MCF 10A (cell line): ENCODE measurements at regions of chr2 and their contacts with region 1.

Region 1: DNA sequence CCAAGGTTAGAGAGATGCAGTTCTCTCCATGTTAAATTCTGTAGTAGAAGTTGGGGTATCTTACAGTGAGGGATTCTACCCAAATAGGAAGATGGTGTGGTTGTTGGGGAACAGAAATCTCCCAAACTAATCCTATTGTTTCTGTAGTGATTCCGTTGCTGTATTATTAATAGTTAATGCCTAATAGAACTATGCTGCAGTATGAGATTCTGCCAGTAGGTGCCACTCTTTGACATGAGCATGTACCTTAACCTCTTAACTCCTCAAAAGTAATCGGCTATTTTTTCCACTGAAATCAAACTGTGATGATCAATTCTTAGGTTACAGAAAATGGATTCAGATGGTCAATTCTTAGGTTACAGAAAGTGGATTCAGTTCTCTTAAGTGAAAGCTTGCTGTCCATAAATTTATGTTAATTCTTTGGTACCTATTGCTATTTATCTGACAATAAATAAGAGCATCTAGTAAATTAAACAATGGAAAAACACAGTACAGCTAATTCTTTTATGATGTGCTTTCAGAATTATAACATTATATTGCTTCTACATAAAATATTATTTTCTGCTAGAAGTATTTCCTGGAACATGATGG is 97.9 kb upstream of the DLX2 start:
- DNase-seq: peak; percentile 51
- H3K4me3 Mint-ChIP-seq: no peak overlapping the region
- H3K27ac Mint-ChIP-seq: peak overlapping the region; percentile 49
- H3K4me1 Mint-ChIP-seq: peaks cover 30% of the 10 kb centered on the region
- H3K27me3 Mint-ChIP-seq: no peaks in the 10 kb centered on the region
- CTCF ChIP-seq: peak; percentile 41

Region 2: DNA sequence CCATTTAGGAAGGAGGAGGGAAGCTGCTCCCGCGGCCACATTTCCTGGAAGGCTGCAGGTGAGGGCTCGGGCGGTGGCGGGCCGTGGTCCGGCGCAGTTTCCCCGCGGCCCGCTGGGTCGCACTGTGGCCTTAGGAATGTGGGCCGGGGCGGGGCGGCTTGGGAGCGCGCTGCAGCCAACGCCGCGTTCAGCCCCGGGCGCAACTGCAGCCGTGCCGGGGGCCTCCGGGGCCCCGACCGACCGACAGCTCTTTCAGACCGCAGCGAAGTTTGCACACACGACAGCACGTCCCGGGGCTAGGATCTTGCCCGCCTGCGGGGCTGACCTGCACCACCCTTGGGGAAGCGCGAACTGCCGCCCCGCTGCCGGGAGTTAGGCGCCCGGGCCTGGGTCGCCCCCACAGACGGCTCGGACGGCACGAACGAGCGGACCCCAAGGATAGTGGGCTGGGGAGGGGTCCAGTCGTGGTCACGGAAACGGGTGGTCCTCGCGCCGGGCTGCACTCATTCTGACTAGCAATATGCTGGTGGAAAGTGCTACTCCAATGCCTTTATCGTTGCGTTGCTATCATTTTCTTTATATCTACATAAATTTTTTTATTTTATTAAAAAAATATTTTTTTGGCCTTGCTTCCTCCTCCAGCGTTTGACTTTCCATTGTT is 27.9 kb before region 1 on chr2:
- CTCF ChIA-PET with region 1: interaction called, 4 read pairs
- POLR2A ChIA-PET with region 1: interaction called, 75 read pairs
- intact Hi-C with region 1: loop called (anchors 5 kb)
- DNase-seq: peak; percentile 74
- H3K4me3 Mint-ChIP-seq: peak overlapping the region; percentile 66
- H3K27ac Mint-ChIP-seq: no peak overlapping the region
- H3K4me1 Mint-ChIP-seq: no peaks in the 10 kb centered on the region
- H3K27me3 Mint-ChIP-seq: no peaks in the 10 kb centered on the region
- CTCF ChIP-seq: peak; percentile 93

Region 3: DNA sequence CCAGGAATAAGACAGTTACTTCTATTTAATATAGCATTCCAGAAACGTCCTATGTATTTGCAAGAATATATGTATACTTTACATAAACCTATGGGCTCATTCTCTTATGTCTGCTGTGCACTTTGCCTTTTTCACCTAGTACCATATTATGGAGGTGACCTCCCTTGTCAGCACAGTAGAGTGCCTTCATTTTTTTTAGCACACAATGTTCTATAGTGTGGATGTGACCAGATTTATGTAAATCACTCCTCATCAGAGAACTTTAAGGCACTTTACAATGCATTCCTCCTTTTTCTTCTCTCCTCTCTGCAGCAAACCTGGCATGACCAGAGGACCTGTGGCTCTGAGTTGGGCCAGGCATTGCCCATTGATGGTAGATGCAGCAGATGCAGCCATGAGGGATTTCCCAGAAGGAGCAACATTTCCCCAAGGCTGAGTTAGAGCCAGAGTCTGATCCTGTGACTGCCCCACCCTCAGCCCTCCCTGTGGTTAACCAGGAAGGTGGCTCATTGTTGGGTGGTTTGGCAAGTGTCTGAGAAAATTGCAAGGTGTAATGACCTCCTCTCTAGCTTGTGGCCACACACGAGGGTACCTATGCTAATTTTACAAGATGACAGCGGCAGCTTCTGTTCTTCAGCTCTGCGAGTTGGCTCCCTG is 21.4 kb before region 1 on chr2:
- CTCF ChIA-PET with region 1: interaction called, 4 read pairs
- POLR2A ChIA-PET with region 1: interaction called, 75 read pairs
- intact Hi-C with region 1: loop called (anchors 2 kb)
- DNase-seq: peak; percentile 89
- H3K4me3 Mint-ChIP-seq: no peak overlapping the region
- H3K27ac Mint-ChIP-seq: peak overlapping the region; percentile 9
- H3K4me1 Mint-ChIP-seq: peaks cover 28% of the 10 kb centered on the region
- H3K27me3 Mint-ChIP-seq: no peaks in the 10 kb centered on the region
- CTCF ChIP-seq: no peak

Region 4: GRCh38 chr2:172215172-172215935 is 14.8 kb after region 1 on chr2:
- CTCF ChIA-PET with region 1: interaction called, 5 read pairs
- POLR2A ChIA-PET with region 1: interaction called, 62 read pairs
- intact Hi-C with region 1: no loop called
- DNase-seq: peak; percentile 60
- H3K4me3 Mint-ChIP-seq: no peak overlapping the region
- H3K27ac Mint-ChIP-seq: peak overlapping the region; percentile 81
- H3K4me1 Mint-ChIP-seq: peaks cover 20% of the 10 kb centered on the region
- H3K27me3 Mint-ChIP-seq: no peaks in the 10 kb centered on the region
- CTCF ChIP-seq: no peak

Region 5: GRCh38 chr2:172226244-172227061 is 25.9 kb after region 1 on chr2:
- CTCF ChIA-PET with region 1: interaction called, 5 read pairs
- POLR2A ChIA-PET with region 1: interaction called, 155 read pairs
- intact Hi-C with region 1: no loop called
- DNase-seq: no peak
- H3K4me3 Mint-ChIP-seq: no peak overlapping the region
- H3K27ac Mint-ChIP-seq: no peak overlapping the region
- H3K4me1 Mint-ChIP-seq: peaks cover 55% of the 10 kb centered on the region
- H3K27me3 Mint-ChIP-seq: no peaks in the 10 kb centered on the region
- CTCF ChIP-seq: peak; percentile 23

Region 6: GRCh38 chr2:172246649-172247048 is 46.1 kb after region 1 on chr2:
- CTCF ChIA-PET with region 1: interaction called, 6 read pairs
- POLR2A ChIA-PET with region 1: interaction called, 13 read pairs
- intact Hi-C with region 1: no loop called
- DNase-seq: peak; percentile 57
- H3K4me3 Mint-ChIP-seq: no peak overlapping the region
- H3K27ac Mint-ChIP-seq: peak overlapping the region; percentile 100
- H3K4me1 Mint-ChIP-seq: peaks cover 68% of the 10 kb centered on the region
- H3K27me3 Mint-ChIP-seq: no peaks in the 10 kb centered on the region
- CTCF ChIP-seq: no peak

Region 7: GRCh38 chr2:172323256-172323655 is 122.7 kb after region 1 on chr2:
- CTCF ChIA-PET with region 1: no interaction called
- POLR2A ChIA-PET with region 1: no interaction called
- intact Hi-C with region 1: no loop called
- DNase-seq: no peak
- H3K4me3 Mint-ChIP-seq: no peak overlapping the region
- H3K27ac Mint-ChIP-seq: no peak overlapping the region
- H3K4me1 Mint-ChIP-seq: peaks cover 6% of the 10 kb centered on the region
- H3K27me3 Mint-ChIP-seq: no peaks in the 10 kb centered on the region
- CTCF ChIP-seq: no peak

Region 8: GRCh38 chr2:172442072-172442895 is 241.7 kb after region 1 on chr2:
- CTCF ChIA-PET with region 1: no interaction called
- POLR2A ChIA-PET with region 1: interaction called, 34 read pairs
- intact Hi-C with region 1: no loop called
- DNase-seq: peak; percentile 99
- H3K4me3 Mint-ChIP-seq: peak overlapping the region; percentile 65
- H3K27ac Mint-ChIP-seq: peak overlapping the region; percentile 98
- H3K4me1 Mint-ChIP-seq: peaks cover 45% of the 10 kb centered on the region
- H3K27me3 Mint-ChIP-seq: no peaks in the 10 kb centered on the region
- CTCF ChIP-seq: no peak